HEK293 (cell line): ENCODE measurements at regions of chr2 and their contacts with region 1.

Region 1: DNA sequence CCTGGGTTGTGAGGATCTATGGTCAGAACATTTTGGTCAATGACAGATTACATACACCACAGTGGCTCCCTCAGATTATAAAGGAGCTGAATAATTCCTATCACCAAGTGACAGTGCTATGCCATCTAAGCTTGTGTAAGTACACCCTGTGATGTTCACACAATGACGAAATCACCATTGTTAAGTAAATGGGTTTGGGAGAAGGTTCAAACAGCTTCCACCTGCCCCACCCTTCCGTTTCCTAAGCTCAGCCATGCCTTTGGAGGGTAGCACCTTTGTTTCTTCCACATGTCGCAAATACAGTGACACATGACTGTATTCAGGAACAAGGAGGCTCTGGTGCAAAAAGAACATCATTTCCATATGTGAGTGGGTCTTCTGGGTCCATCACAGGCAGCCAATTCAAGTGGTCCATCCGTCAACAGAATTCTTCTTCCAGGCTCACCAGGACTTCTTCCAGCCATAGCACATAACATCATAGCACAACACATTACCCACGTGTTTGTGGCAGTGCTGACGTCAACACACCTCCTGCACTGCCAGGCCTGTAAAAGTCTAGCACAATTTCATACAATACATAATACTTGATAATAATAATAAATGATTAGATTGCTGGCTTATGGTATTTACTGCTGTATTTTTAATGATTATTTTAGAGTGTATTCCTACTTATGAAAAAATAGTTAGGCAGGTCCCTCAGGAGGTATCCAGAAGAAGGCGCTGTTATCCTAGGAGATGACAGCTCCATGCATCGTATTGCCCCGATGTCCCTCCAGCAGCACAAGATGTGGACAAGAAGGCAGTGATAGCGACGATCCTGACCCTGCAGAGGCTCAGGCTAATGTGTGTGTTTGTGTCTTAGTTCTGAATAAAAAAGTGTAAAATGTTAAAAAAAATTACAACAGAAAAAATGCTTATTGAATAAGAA is 264.8 kb downstream of the ANAPC1 start:
- H3K4me3 ChIP-seq: no peak overlapping the region
- H3K27ac ChIP-seq: no peak overlapping the region
- H3K4me1 ChIP-seq: no peaks in the 10 kb centered on the region
- CTCF ChIP-seq: no peak

Region 2: GRCh38 chr2:111698743-111699554 is 79.7 kb after region 1 on chr2:
- CTCF ChIA-PET with region 1: interaction called, 11 read pairs
- POLR2A ChIA-PET with region 1: interaction called, 4 read pairs
- H3K4me3 ChIP-seq: peak overlapping the region; percentile 20
- H3K27ac ChIP-seq: peak overlapping the region; percentile 9; the same call in 1 of the 2 replicates
- H3K4me1 ChIP-seq: no peaks in the 10 kb centered on the region
- CTCF ChIP-seq: peak; percentile 85